ENCODE measurements at regions of chr15 and their contacts with region 1.

Region 1: GRCh38 chr15:77821188-77821958 is 188.7 kb upstream of the LINGO1 start:
- DNase-seq: peak in 5 of 6 donors; percentile 21 to 77 (median 52)
- ATAC-seq: peak; percentile 64 to 89 (median 87)
- H3K4me3 ChIP-seq: no peak overlapping the region
- H3K27ac ChIP-seq: no peak overlapping the region
- H3K4me1 ChIP-seq: peaks cover 0 to 5% (median 0%) of the 10 kb centered on the region in 3 donors
- H3K27me3 ChIP-seq: peaks cover 0 to 27% (median 3%) of the 10 kb centered on the region in 4 donors
- CTCF ChIP-seq: peak; percentile 13 to 51 (median 38)

Region 2: DNA sequence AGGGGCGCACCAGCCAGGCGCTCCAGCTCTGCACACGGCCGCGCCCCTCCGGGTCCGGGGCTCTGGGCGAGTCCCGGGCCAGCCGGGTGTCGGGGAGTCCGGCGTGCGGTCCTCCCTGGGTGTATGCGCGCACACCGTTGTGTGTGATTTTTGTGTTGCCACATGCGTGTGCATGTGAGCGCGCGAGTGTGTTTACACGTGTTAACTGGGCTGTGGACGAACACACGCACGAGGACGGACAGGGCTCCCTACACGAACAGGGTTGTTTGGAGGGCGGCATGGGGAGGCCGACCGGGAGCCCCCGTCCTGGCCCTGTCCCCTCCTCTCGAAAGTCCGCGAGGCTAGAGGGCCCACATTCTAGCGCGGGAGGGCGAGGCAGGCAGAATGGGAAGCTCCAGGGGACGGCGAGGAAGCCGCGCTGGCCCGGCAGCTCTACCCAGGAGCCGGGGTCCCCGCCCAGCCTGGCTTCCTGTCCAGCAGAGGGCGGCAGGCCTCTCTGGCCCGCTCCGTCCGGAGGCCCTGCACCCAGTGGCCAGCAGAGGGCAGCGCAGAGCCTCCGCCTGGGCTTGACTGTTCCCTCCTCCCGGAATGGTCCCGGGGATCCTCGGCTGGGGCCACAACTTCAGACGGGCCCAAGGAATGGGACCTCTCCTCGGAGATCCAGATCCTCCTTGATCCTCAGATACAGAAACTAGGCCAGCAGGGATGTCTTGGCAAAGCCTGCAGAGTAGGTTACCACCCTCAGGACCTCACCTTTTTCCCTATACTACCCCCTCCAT is 188.1 kb before region 1 on chr15:
- intact Hi-C with region 1: loop called in 1 of 3 experiments (anchors 10 kb)
- DNase-seq: peak; percentile 80 to 98 (median 92)
- ATAC-seq: peak; percentile 95 to 99 (median 96)
- H3K4me3 ChIP-seq: peak overlapping the region; percentile 26 to 68 (median 46)
- H3K27ac ChIP-seq: no peak overlapping the region
- H3K4me1 ChIP-seq: peaks cover 0 to 4% (median 0%) of the 10 kb centered on the region in 3 donors
- H3K27me3 ChIP-seq: no peaks in the 10 kb centered on the region
- CTCF ChIP-seq: peak; percentile 100

Region 3: GRCh38 chr15:77659350-77660321 is 161.7 kb before region 1 on chr15:
- intact Hi-C with region 1: loop called in 1 of 3 experiments (anchors 10 kb)
- DNase-seq: peak in 5 of 6 donors; percentile 69 to 79 (median 77)
- ATAC-seq: peak; percentile 77 to 95 (median 86)
- H3K4me3 ChIP-seq: no peak overlapping the region
- H3K27ac ChIP-seq: no peak overlapping the region
- H3K4me1 ChIP-seq: no peaks in the 10 kb centered on the region
- H3K27me3 ChIP-seq: no peaks in the 10 kb centered on the region
- CTCF ChIP-seq: peak in 2 of 4 donors; percentile 24 to 28

Region 4: GRCh38 chr15:77753270-77753873 is 68.0 kb before region 1 on chr15:
- intact Hi-C with region 1: loop called in 1 of 3 experiments (anchors 10 kb)
- DNase-seq: no peak
- ATAC-seq: peak in 2 of 4 donors; percentile 28 to 47
- H3K4me3 ChIP-seq: no peak overlapping the region
- H3K27ac ChIP-seq: no peak overlapping the region
- H3K4me1 ChIP-seq: no peaks in the 10 kb centered on the region
- H3K27me3 ChIP-seq: no peaks in the 10 kb centered on the region
- CTCF ChIP-seq: no peak